Dorsolateral prefrontal cortex (tissue), 120 donors: ENCODE measurements at regions of chr17 and their contacts with region 1.

Region 1: DNA sequence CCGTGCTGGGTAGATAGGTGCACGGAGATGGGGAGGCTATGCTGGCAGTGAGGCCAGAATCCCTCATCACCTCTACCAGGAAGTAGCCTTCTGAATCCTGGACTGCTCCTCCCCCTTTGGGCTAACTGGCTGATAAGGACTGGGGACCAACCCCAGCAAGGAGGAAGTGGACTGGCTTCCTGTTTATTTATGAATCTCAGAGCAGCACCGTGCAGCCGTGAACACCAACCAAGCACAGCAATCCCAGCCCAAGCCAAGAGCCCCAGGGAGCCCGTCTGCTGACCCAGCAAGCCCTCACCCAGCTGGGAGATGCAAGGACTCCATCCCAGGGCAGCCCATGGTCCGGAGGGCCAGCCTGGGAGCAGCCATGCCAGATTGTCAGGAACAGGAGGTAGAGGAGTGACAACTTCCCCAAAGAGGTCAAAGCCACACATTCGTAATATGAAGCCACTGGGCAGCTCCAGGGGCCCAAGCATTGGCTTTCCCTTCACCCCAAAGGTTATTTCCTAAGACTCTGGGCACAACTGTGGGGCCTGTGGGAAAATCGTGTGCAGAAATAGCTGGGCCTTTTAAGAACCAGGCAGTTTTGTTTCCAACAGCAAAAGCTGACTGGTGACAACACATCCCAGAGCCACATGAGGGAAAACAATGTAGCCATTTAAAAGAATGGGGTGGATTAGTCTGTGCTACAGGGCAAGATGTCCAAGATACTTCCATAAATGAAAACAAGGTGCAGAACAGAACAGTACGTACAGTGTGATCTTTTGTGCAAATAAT is 23.9 kb downstream of the PHB1 start:
- DNase-seq: peak in 3 of 10 donors; percentile 50 to 58 (median 52)
- H3K4me3 ChIP-seq: peak overlapping the region in 8 of 59 donors; percentile 1 to 37 (median 17)
- H3K27ac ChIP-seq: peak overlapping the region; percentile 83 to 100 (median 97)
- H3K27me3 ChIP-seq: no peaks in the 10 kb centered on the region
- CTCF ChIP-seq: peak in 6 of 56 donors; percentile 13 to 35 (median 18)

Region 2: DNA sequence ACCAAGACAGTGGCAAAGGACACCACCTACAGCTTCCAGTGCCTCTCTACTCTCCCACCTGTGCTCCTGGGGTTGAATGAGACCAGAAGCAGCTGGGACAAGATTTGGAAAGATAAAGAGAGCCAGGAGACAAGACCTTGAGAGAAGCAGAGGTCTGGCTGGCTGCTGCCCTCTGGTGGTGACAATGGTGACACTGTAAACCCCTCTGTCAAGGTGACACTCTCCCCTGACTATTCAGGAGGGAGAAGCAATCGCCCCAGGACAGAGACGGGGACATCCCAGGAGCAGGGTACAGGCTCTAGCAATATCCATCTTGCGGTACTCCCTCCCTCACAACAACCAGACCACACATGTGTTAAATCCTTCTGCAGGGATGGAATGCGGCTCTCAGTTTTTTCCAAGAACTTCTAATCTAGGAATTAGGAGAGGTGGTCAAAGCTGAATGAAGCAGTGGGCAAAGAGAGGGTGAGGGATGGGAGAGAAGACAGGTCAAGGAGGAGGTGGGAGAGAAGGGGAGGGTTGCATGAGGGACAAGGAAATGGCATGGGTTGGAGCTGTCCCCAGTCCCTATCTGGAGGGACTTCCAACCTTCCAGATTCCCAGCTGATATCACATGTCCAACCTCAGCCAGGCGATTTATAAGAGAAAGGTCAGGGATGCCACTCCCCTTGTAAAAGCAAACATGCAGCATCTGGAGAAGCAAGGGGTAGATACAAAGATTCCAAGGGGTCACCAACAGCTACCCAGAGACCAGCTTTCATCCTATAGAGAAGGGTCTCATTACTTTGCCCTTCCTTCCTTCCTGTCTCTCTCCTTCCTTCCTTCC is 163.1 kb before region 1 on chr17:
- intact Hi-C with region 1: loop called in 1 of 2 experiments (anchors 10 kb)
- DNase-seq: peak in 9 of 10 donors; percentile 49 to 84 (median 76)
- H3K4me3 ChIP-seq: no peak overlapping the region
- H3K27ac ChIP-seq: no peak overlapping the region
- H3K27me3 ChIP-seq: peaks cover 0 to 32% (median 20%) of the 10 kb centered on the region in 45 donors
- CTCF ChIP-seq: peak; percentile 59 to 90 (median 81)

Region 3: GRCh38 chr17:49315551-49316257 is 75.0 kb before region 1 on chr17:
- intact Hi-C with region 1: loop called (anchors 1 kb)
- DNase-seq: peak; percentile 53 to 88 (median 78)
- H3K4me3 ChIP-seq: peak overlapping the region in 31 of 59 donors; percentile 0 to 47 (median 23)
- H3K27ac ChIP-seq: peak overlapping the region in 58 of 59 donors; percentile 3 to 95 (median 83)
- H3K27me3 ChIP-seq: no peaks in the 10 kb centered on the region
- CTCF ChIP-seq: peak; percentile 60 to 97 (median 85)

Region 4: GRCh38 chr17:49438436-49439278 is 47.9 kb after region 1 on chr17:
- intact Hi-C with region 1: no loop called
- DNase-seq: peak in 1 of 10 donors; percentile 33
- H3K4me3 ChIP-seq: peak overlapping the region in 17 of 59 donors; percentile 6 to 50 (median 19)
- H3K27ac ChIP-seq: peak overlapping the region in 6 of 59 donors; percentile 10 to 65 (median 38)
- H3K27me3 ChIP-seq: peaks cover 0 to 36% (median 13%) of the 10 kb centered on the region in 45 donors
- CTCF ChIP-seq: peak in 23 of 56 donors; percentile 9 to 42 (median 24)